ENCODE measurements at regions of chr13 and their contacts with region 1.

Region 1: GRCh38 chr13:114226699-114227323 is 7.9 kb upstream of the CDC16 start:
- DNase-seq: peak; percentile 80
- H3K4me3 ChIP-seq: no peak overlapping the region
- H3K27ac ChIP-seq: no peak overlapping the region
- H3K4me1 ChIP-seq: peaks cover 10% of the 10 kb centered on the region
- H3K27me3 ChIP-seq: peaks cover 29% of the 10 kb centered on the region in 2 experiments
- CTCF ChIP-seq: peak; percentile 83 to 93
- POLR2A ChIP-seq: no peak

Region 2: GRCh38 chr13:113825841-113826240 is 401.0 kb before region 1 on chr13:
- CTCF ChIA-PET with region 1: no interaction called
- POLR2A ChIA-PET with region 1: no interaction called
- dilution Hi-C with region 1: no loop called
- intact Hi-C with region 1: no loop called
- DNase-seq: no peak
- H3K4me3 ChIP-seq: no peak overlapping the region
- H3K27ac ChIP-seq: no peak overlapping the region
- H3K4me1 ChIP-seq: no peaks in the 10 kb centered on the region
- H3K27me3 ChIP-seq: no peaks in the 10 kb centered on the region
- CTCF ChIP-seq: no peak
- POLR2A ChIP-seq: no peak

Region 3: GRCh38 chr13:113951246-113951999 is 275.4 kb before region 1 on chr13:
- CTCF ChIA-PET with region 1: interaction called, 19 read pairs
- POLR2A ChIA-PET with region 1: no interaction called
- dilution Hi-C with region 1: no loop called
- intact Hi-C with region 1: loop called (anchors 1 kb)
- DNase-seq: peak; percentile 56
- H3K4me3 ChIP-seq: no peak overlapping the region
- H3K27ac ChIP-seq: no peak overlapping the region
- H3K4me1 ChIP-seq: no peaks in the 10 kb centered on the region
- H3K27me3 ChIP-seq: no peaks in the 10 kb centered on the region
- CTCF ChIP-seq: peak; percentile 79 to 90
- POLR2A ChIP-seq: no peak

Region 4: DNA sequence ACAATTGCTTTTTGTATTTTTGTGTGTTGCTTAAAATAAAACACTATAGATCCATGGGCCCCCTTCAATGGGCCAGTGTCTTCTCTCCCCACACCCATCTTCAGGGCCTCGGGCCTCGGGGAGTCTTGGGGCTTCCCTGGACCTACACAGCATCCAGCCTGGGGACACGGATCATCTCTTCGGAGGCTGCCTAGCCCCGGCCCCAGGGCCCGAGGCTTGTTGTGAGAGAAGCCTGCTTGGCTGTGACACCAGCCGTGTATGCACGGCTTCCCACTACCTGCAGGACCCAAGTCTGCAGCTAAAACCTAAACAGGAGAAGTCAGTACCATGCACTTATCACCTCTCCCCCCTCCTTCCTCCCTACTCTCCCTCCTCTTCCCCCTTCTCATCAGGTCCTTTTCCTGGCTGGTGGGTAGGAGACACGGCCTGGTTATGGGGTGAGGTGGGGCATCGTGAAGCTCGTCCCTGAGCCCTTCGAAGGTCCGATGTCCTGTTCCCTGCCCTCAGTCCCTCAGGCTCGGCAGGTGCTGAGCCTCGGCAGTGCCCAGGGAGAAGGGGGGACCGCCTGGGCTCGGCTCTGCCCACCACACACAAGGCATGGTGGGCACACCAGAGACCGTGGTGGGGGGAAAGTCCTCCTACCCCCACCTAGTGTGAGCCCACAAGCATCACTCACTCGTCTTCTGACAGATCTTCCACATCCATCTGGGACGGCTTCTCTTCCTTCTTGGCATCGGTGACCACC is 262.4 kb before region 1 on chr13:
- CTCF ChIA-PET with region 1: no interaction called
- POLR2A ChIA-PET with region 1: no interaction called
- dilution Hi-C with region 1: no loop called
- intact Hi-C with region 1: no loop called
- DNase-seq: no peak
- H3K4me3 ChIP-seq: no peak overlapping the region
- H3K27ac ChIP-seq: no peak overlapping the region
- H3K4me1 ChIP-seq: no peaks in the 10 kb centered on the region
- H3K27me3 ChIP-seq: no peaks in the 10 kb centered on the region
- CTCF ChIP-seq: no peak
- POLR2A ChIP-seq: no peak

Region 5: DNA sequence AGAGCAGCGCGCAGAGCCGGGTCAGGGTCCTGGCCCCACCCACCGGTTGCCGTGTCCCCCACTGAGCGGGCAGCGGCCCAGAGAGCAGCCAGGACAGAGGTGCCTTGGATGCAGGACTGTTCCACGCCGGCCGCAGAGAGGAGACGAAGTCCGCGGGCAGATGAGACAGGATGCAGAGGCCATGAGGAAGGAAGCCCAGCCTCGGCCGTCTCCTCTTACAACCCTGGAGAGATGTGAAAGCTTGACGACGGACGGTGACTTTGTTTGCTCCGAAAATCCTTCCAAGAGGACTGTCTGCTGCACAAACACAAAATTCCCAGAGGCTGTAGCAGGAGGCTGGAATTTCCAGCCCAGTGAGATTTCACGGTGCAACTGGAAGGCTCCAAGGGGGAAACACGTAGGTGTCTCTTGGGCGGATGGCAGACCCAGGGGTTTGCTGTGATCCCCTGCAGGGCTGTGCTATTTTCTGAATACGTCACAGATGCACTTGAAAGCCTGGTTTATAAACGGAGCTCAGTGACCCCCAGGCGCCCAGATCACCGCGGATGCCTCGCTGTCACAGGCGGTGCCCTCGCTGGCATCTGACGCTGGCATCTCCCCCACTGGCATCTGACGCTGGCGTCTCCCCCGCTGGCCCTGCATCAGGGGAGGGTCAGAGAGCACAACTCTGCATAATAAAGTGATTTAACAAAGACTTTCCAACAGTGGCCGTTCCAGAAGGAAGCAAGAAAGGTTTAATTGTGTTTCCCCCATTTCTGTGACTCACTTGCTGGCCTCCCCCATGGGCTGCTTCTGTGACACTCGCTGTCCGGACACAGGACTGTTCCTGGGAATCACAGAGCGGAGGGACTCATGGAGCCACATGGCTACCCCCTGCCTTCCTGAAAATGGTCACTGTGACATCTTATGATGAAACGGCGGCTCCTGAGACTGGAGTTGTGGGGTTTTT is 191.0 kb before region 1 on chr13:
- CTCF ChIA-PET with region 1: no interaction called
- POLR2A ChIA-PET with region 1: no interaction called
- dilution Hi-C with region 1: no loop called
- intact Hi-C with region 1: loop called (anchors 5 kb)
- DNase-seq: peak; percentile 47
- H3K4me3 ChIP-seq: no peak overlapping the region
- H3K27ac ChIP-seq: peak overlapping the region; percentile 1
- H3K4me1 ChIP-seq: peaks cover 25% of the 10 kb centered on the region
- H3K27me3 ChIP-seq: no peaks in the 10 kb centered on the region
- CTCF ChIP-seq: no peak
- POLR2A ChIP-seq: no peak

Region 6: DNA sequence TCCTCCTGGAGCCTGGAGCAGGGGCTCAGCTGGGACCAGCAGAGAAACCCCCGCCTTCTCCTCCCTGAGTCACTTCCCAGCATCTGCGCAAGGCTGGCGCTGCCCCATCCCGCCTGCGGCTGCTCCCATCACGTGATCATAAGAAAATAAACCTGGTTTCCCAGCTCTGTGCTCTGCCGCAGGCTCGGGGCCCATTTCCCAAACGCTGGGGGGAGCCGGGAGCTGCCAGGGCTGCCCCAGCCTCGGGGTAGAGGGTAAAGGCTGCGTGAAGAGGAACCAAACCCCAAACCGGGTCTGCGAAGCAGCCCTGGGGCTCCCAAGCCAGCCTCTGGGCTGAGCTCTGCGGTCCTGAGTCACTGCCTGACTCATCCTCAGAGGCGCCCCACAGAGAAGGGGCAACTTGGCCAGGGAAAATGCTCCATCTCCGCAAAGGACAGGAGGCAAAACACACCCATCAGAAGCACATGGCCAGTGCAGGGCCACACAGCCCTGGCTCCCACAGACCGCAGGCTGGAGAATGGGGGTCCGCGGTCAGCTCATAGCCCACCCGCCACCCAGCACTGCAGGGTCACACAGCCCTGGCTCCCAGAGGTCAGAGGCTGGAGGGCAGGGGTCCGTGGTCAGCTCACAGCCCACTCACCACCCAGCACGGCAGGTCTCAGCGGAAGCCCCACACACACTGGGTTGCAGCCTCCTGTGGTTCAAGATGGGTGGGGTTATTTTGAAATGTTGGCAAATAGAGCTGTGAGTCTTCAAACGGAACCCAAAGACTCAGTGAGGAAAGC is 161.5 kb before region 1 on chr13:
- CTCF ChIA-PET with region 1: interaction called, 3 read pairs
- POLR2A ChIA-PET with region 1: no interaction called
- dilution Hi-C with region 1: no loop called
- intact Hi-C with region 1: loop called (anchors 1 kb)
- DNase-seq: peak; percentile 96
- H3K4me3 ChIP-seq: no peak overlapping the region
- H3K27ac ChIP-seq: peak overlapping the region; percentile 95
- H3K4me1 ChIP-seq: peaks cover 51% of the 10 kb centered on the region
- H3K27me3 ChIP-seq: no peaks in the 10 kb centered on the region
- CTCF ChIP-seq: no peak
- POLR2A ChIP-seq: peak; percentile 51

Region 7: GRCh38 chr13:114110091-114110829 is 116.6 kb before region 1 on chr13:
- CTCF ChIA-PET with region 1: interaction called, 7 read pairs
- POLR2A ChIA-PET with region 1: no interaction called
- dilution Hi-C with region 1: no loop called
- intact Hi-C with region 1: loop called (anchors 2 kb)
- DNase-seq: peak; percentile 81
- H3K4me3 ChIP-seq: no peak overlapping the region
- H3K27ac ChIP-seq: peak overlapping the region; percentile 44
- H3K4me1 ChIP-seq: peaks cover 37% of the 10 kb centered on the region
- H3K27me3 ChIP-seq: no peaks in the 10 kb centered on the region
- CTCF ChIP-seq: peak; percentile 38 to 58
- POLR2A ChIP-seq: no peak

Region 8: DNA sequence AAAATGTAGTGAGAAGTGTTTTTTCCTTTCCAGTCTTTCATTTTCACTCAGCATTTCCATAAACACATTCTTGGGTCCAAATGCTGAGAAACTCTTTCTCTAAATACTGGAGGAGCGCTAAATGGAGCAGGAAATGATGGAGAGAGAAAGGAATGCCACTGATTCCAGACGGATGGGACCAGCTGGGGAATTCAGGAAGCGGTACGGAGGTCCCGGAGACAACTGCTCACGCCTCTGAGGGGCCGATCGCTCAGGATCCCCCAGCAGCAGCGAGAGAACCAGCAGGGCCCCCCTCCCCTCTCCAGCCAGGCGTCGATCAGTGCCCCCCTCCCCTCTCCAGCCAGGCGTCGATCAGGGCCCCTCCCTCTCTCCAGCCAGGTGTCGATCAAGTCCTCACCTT is 107.6 kb before region 1 on chr13:
- CTCF ChIA-PET with region 1: interaction called, 5 read pairs
- POLR2A ChIA-PET with region 1: no interaction called
- dilution Hi-C with region 1: no loop called
- intact Hi-C with region 1: loop called (anchors 2 kb)
- DNase-seq: peak; percentile 97
- H3K4me3 ChIP-seq: peak overlapping the region in 1 of 3 experiments; percentile 13
- H3K27ac ChIP-seq: peak overlapping the region; percentile 99
- H3K4me1 ChIP-seq: peaks cover 49% of the 10 kb centered on the region
- H3K27me3 ChIP-seq: no peaks in the 10 kb centered on the region
- CTCF ChIP-seq: no peak
- POLR2A ChIP-seq: peak; percentile 35

Region 9: GRCh38 chr13:114132419-114133121 is 94.2 kb before region 1 on chr13 and contains the start of gene RASA3:
- CTCF ChIA-PET with region 1: interaction called, 4 read pairs
- POLR2A ChIA-PET with region 1: no interaction called
- dilution Hi-C with region 1: no loop called
- intact Hi-C with region 1: loop called (anchors 1 kb)
- DNase-seq: peak; percentile 76
- H3K4me3 ChIP-seq: peak within 1 kb of the TSS; percentile 31 to 86 (median 51)
- H3K27ac ChIP-seq: peak within 1 kb of the TSS; percentile 87
- H3K4me1 ChIP-seq: peaks cover 37% of the 10 kb centered on the region
- H3K27me3 ChIP-seq: no peaks in the 10 kb centered on the region
- CTCF ChIP-seq: no peak
- POLR2A ChIP-seq: peak; percentile 80
- total RNA-seq, gene RASA3: 51.2 and 53.8 TPM in 2 replicates

Region 10: GRCh38 chr13:114244637-114245036 is 17.8 kb after region 1 on chr13:
- CTCF ChIA-PET with region 1: no interaction called
- POLR2A ChIA-PET with region 1: no interaction called
- dilution Hi-C with region 1: no loop called
- intact Hi-C with region 1: no loop called
- DNase-seq: no peak
- H3K4me3 ChIP-seq: no peak overlapping the region
- H3K27ac ChIP-seq: no peak overlapping the region
- H3K4me1 ChIP-seq: no peaks in the 10 kb centered on the region
- H3K27me3 ChIP-seq: no peaks in the 10 kb centered on the region
- CTCF ChIP-seq: no peak
- POLR2A ChIP-seq: no peak